HEK293 (cell line): ENCODE measurements at regions of chr9 and their contacts with region 1.

Region 1: GRCh38 chr9:36995927-36996705 is 38.0 kb downstream of the PAX5 start:
- H3K4me3 ChIP-seq: no peak overlapping the region
- H3K27ac ChIP-seq: no peak overlapping the region
- H3K4me1 ChIP-seq: no peaks in the 10 kb centered on the region
- CTCF ChIP-seq: peak; percentile 80

Region 2: DNA sequence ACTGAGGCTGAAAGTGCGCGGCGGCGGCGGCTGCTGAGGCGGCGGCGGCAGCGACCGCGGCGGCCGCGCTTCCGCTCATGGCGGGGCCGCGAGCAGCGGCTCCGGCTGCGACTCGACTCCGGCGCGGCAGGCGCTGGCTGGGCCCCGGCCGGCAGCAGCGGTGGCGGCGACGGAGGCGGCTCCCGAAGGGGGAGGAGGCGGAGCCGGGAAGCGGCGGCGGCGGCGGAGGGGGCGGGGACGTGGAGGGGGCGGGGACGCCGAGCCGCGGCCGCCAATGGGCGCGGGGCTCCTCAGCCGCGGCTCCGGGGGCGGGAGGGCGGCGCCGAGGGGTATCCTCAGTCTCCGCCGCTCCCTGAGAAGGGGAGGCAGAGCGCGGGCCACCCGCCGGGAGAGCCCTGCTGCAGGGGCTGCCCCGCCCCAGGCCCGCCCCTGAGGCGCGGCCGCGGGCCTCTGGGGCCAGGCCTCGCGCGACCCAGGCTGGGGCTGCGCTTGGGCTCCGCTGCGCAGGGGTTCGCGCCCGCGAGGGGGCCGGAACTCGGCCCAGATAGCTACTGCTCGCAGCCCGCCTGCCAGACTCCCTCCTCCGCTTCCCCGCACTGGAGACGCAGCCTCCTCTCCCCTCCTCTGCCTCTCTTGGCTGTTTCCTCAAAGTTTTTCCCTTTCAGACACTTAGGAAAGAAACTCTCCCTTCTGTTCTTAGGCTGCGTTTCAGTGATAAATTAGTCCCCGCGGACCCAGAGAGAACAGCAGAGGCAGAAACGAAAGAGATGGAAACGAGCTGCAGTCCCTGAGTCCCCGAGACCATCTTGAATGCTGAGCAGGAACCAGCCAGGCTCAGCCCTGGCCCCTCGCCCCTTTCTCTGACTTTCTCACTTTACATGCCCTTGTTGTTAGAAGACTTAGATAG is 508.4 kb before region 1 on chr9:
- CTCF ChIA-PET with region 1: no interaction called
- POLR2A ChIA-PET with region 1: no interaction called
- H3K4me3 ChIP-seq: peak overlapping the region; percentile 91
- H3K27ac ChIP-seq: peak overlapping the region; percentile 85
- H3K4me1 ChIP-seq: peaks cover 8% of the 10 kb centered on the region
- CTCF ChIP-seq: peak; percentile 24; the same call in 1 of the 2 replicates

Region 3: DNA sequence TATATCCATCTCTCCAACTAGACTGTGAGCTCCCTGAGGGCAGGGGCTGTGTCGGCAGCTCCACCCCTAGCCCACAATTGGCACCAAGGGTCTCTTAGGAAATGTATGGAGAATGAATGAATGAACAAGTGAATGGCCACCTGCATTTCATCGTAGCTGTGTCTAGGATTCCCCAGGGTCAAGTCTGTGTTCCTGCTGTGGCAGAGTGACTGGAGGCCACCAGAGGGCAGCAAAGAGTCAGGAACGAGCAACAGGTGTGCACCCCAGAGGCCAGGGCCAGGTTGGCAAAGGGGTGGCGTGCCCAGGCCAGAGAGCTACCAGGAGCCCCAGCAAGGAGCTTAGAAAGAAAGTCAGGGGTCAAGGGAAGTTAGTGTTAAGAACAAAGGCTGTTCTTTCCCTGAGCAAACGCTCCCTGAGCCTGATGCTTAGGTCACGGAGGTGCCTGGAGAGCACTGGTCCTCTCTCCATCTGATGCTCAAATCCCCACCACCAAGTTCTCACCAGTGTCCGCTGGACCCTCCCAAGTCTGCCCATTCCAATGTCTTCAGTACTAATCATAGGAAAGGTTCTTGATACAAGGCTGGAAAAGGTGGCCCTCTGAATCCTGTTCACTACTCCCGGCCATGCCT is 122.8 kb before region 1 on chr9:
- CTCF ChIA-PET with region 1: interaction called, 448 read pairs
- POLR2A ChIA-PET with region 1: interaction called, 5 read pairs
- H3K4me3 ChIP-seq: no peak overlapping the region
- H3K27ac ChIP-seq: no peak overlapping the region
- H3K4me1 ChIP-seq: no peaks in the 10 kb centered on the region
- CTCF ChIP-seq: peak; percentile 75

Region 4: GRCh38 chr9:36891341-36891959 is 104.7 kb before region 1 on chr9:
- CTCF ChIA-PET with region 1: interaction called, 13 read pairs
- POLR2A ChIA-PET with region 1: no interaction called
- H3K4me3 ChIP-seq: no peak overlapping the region
- H3K27ac ChIP-seq: no peak overlapping the region
- H3K4me1 ChIP-seq: no peaks in the 10 kb centered on the region
- CTCF ChIP-seq: no peak

Region 5: DNA sequence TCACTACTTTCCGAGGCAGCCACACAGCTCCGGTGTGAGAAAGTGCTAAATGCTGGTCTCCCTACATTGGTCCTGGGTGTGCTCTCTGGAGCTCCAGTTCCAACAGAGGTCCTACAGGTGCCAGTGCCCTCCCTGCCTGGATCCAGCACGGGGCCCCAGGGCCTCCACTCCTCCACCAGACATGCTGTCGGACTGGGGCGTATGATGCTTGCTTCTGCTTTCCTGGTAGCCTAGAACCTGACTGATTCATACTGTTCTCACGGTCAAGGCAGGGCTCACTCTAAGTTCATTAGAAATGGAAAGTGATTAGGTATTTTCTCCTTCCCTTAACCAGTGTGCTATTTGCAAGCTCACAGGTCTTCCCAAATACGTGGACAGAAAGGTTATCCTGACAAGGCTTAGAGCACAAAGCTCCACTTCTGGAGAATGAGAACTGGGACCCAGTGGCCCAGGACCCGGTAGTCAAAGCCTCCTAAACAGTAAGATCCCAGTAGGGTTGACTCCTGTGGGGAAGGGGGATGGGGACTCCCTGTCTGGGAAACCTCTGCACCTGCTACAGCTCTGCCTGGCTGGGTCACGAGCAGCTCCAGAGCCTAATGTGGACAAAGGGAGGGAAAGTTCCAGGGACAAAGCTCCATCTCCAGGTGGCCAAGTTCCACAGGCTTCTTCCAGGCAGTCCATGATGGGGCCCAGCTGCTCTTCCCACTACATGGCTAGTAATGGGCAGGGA is 60.2 kb before region 1 on chr9:
- CTCF ChIA-PET with region 1: interaction called, 10 read pairs
- POLR2A ChIA-PET with region 1: no interaction called
- H3K4me3 ChIP-seq: no peak overlapping the region
- H3K27ac ChIP-seq: no peak overlapping the region
- H3K4me1 ChIP-seq: peaks cover 4% of the 10 kb centered on the region
- CTCF ChIP-seq: no peak

Region 6: DNA sequence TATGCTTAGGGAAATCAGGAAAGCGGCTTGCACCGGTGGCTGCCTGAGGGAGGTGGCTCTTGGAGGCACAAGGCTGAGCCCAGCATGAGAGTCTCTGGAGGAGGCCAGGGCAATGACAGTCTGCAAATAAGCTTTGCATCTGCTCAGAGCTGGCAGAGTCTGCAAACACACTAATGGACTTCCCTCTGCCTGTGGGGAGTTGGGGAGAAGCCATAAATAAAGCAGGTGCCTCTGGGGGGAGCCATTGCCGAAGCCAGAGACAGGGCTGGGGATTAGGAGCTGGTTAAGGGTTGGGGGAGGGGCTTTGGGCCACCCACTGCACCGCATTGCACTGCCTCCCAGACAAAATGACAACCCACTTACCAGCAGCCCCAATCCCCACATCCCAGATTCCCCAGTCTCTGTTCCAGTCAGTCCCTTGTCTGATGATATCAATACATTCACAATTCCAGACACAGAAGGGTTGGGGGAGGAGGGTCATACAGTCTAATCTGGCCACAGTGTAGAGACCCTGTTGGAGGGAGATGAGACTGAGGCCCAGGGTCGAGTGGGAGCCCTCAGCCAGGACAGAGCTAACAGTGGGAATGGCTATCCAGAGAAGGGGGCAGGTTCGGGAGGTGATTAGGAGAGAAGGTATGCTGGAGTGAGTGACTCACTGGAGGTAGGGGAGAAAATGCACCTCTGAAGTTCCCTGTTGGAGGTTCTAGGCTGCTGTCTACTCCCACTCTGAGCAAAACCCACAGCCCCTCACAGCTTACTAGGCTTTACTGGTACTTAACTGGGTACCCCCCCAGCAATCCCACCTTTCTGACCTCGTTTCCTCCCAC is 15.8 kb before region 1 on chr9:
- CTCF ChIA-PET with region 1: interaction called, 22 read pairs
- POLR2A ChIA-PET with region 1: no interaction called
- H3K4me3 ChIP-seq: no peak overlapping the region
- H3K27ac ChIP-seq: no peak overlapping the region; the same call in 1 of the 2 replicates
- H3K4me1 ChIP-seq: peaks cover 7% of the 10 kb centered on the region
- CTCF ChIP-seq: peak; percentile 44; the same call in 1 of the 2 replicates

Region 7: DNA sequence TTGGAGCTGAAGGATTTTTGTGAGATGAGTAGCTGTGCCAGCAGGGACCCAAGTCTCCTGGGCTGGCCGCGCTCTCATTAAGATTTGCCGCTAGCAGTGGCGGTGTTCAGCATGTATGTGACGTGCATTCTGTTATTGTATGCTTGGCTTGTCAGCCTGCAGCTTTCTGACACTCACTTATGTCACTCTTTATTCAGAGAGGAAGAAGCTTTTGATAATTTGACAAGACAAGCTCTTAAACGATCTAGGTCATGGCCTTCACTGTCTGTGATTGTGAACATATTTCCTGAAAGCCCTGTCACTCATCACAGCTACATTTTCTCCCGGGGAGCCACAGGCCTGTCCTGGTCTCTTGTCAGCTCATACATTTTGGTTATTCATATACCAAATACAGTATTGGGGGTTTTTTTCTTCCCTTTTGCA is 328.2 kb after region 1 on chr9:
- CTCF ChIA-PET with region 1: interaction called, 42 read pairs
- POLR2A ChIA-PET with region 1: no interaction called
- H3K4me3 ChIP-seq: no peak overlapping the region
- H3K27ac ChIP-seq: no peak overlapping the region
- H3K4me1 ChIP-seq: peaks cover 5% of the 10 kb centered on the region; the same call in 1 of the 2 replicates
- CTCF ChIP-seq: no peak

Region 8: GRCh38 chr9:37415011-37415719 is 419.0 kb after region 1 on chr9:
- CTCF ChIA-PET with region 1: interaction called, 19 read pairs
- POLR2A ChIA-PET with region 1: no interaction called
- H3K4me3 ChIP-seq: no peak overlapping the region
- H3K27ac ChIP-seq: no peak overlapping the region
- H3K4me1 ChIP-seq: no peaks in the 10 kb centered on the region
- CTCF ChIP-seq: peak; percentile 61